ENCODE measurements at regions of chr4 and their contacts with region 1.

Region 1: DNA sequence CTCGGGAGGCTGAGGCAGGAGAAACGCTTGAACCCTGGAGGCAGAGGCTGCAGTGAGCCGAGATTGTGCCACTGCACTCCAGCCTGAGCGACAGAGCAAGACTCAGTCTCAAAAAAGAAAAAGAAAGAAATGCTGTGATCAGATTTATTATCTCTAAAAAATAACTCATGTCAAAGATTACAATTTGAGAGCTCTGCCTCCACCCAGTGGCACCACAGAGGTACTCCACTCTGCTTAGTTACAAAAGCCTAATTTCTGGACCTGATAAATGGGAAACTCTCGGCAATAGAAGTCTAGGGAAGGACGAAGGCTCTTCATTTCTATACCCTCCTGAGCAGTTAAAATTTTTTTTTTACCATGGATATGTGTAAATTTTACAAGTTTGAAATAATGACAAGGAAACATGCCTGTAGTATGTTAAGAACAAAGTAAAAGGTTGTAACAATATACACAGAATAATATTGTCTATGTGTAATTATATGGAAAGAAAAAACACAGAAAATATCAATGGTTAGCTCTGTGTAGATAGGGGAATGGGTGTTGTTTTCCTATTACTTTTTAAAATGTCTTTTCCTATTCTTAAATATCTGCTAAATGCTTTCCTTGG is 149.8 kb downstream of the STIM2 start:
- DNase-seq: peak; percentile 46
- ATAC-seq: peak; percentile 81
- H3K4me3 ChIP-seq: no peak overlapping the region
- H3K27ac ChIP-seq: no peak overlapping the region
- H3K4me1 ChIP-seq: no peaks in the 10 kb centered on the region
- H3K27me3 ChIP-seq: no peaks in the 10 kb centered on the region
- CTCF ChIP-seq: peak; percentile 69
- EP300 ChIP-seq: no peak
- POLR2A ChIP-seq: no peak
- RAD21 ChIP-seq: peak; percentile 59; the same call in 1 of the 2 replicates

Region 2: GRCh38 chr4:26325191-26325590 is 685.2 kb before region 1 on chr4:
- CTCF ChIA-PET with region 1: no interaction called
- POLR2A ChIA-PET with region 1: no interaction called
- in situ Hi-C with region 1: no loop called
- intact Hi-C with region 1: loop called (anchors 5 kb)
- DNase-seq: peak; percentile 42
- ATAC-seq: no peak
- H3K4me3 ChIP-seq: no peak overlapping the region
- H3K27ac ChIP-seq: no peak overlapping the region
- H3K4me1 ChIP-seq: peaks cover 22% of the 10 kb centered on the region
- H3K27me3 ChIP-seq: no peaks in the 10 kb centered on the region; a peak in 1 of 5 replicates
- CTCF ChIP-seq: peak; percentile 46
- EP300 ChIP-seq: no peak
- POLR2A ChIP-seq: no peak
- RAD21 ChIP-seq: no peak

Region 3: DNA sequence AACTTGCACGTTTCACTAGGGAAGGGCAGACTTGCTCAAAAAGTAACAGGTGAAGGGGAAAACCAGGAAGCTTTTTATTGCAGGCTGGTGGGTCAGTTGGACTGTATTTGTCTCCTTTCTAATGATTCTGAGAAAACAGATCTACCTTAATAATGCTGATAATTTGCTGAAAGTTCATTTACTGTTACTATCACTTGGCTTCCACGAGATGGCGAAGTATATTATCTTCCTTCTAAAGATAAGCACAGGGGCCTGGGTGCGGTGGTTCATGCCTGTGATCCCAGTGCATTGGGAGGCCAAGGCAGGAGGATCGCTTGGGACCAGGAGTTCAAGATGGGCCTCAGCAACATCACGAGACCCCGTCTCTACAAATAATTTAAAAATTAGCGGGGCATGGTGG is 536.5 kb before region 1 on chr4:
- CTCF ChIA-PET with region 1: interaction called, 3 read pairs
- POLR2A ChIA-PET with region 1: no interaction called
- in situ Hi-C with region 1: loop called (anchors 10 kb)
- intact Hi-C with region 1: loop called (anchors 5 kb)
- DNase-seq: no peak
- ATAC-seq: no peak; the same call in 2 of the 3 replicates
- H3K4me3 ChIP-seq: no peak overlapping the region
- H3K27ac ChIP-seq: no peak overlapping the region
- H3K4me1 ChIP-seq: no peaks in the 10 kb centered on the region
- H3K27me3 ChIP-seq: 0 out of 5 replicates have a peak, but pooled peaks cover 0 to 3% of the 10 kb centered on the region in 2 experiments
- CTCF ChIP-seq: peak; percentile 19; the same call in 1 of the 2 replicates
- EP300 ChIP-seq: no peak
- POLR2A ChIP-seq: no peak
- RAD21 ChIP-seq: no peak

Region 4: GRCh38 chr4:26719954-26720552 is 290.4 kb before region 1 on chr4:
- CTCF ChIA-PET with region 1: no interaction called
- POLR2A ChIA-PET with region 1: no interaction called
- in situ Hi-C with region 1: no loop called
- intact Hi-C with region 1: loop called (anchors 10 kb)
- DNase-seq: no peak
- ATAC-seq: no peak
- H3K4me3 ChIP-seq: no peak overlapping the region
- H3K27ac ChIP-seq: no peak overlapping the region
- H3K4me1 ChIP-seq: no peaks in the 10 kb centered on the region
- H3K27me3 ChIP-seq: no peaks in the 10 kb centered on the region
- CTCF ChIP-seq: peak; percentile 46
- EP300 ChIP-seq: no peak
- POLR2A ChIP-seq: no peak
- RAD21 ChIP-seq: no peak

Region 5: GRCh38 chr4:26822546-26822945 is 187.9 kb before region 1 on chr4:
- CTCF ChIA-PET with region 1: no interaction called
- POLR2A ChIA-PET with region 1: no interaction called
- in situ Hi-C with region 1: no loop called
- intact Hi-C with region 1: loop called (anchors 1 kb)
- DNase-seq: no peak
- ATAC-seq: no peak; the same call in 2 of the 3 replicates
- H3K4me3 ChIP-seq: peak overlapping the region in 2 of 3 experiments; percentile 23 to 34; a peak in 2 of 6 replicates
- H3K27ac ChIP-seq: peak overlapping the region; percentile 85
- H3K4me1 ChIP-seq: peaks cover 36% of the 10 kb centered on the region
- H3K27me3 ChIP-seq: no peaks in the 10 kb centered on the region
- CTCF ChIP-seq: no peak
- EP300 ChIP-seq: no peak
- POLR2A ChIP-seq: no peak
- RAD21 ChIP-seq: no peak

Region 6: DNA sequence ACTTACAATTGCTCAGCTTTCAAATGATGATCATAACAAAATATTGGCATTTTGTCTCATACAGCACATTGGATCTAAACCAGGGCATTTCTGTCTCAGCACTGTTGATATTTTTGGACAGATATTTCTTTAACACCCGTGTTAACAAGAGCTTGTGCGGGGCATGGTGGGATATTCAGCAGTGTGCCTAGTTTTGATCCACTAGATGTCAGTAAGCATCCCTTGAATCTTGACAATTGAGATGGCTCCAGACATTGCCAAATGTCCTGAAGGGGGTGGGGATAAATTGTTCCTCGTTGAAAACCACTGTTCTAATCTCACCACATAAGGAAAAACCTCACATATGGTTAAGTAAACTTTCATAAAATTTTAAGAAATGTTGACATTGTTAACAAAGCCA is 656.5 kb after region 1 on chr4:
- CTCF ChIA-PET with region 1: no interaction called
- POLR2A ChIA-PET with region 1: no interaction called
- in situ Hi-C with region 1: no loop called
- intact Hi-C with region 1: no loop called
- DNase-seq: no peak
- ATAC-seq: 0 out of 3 replicates have a peak, but pooled peaks have one; percentile 43
- H3K4me3 ChIP-seq: no peak overlapping the region
- H3K27ac ChIP-seq: no peak overlapping the region
- H3K4me1 ChIP-seq: no peaks in the 10 kb centered on the region
- H3K27me3 ChIP-seq: no peaks in the 10 kb centered on the region
- CTCF ChIP-seq: no peak
- EP300 ChIP-seq: no peak
- POLR2A ChIP-seq: no peak
- RAD21 ChIP-seq: no peak